ENCODE measurements at regions of chr6 and their contacts with region 1.

Region 1: DNA sequence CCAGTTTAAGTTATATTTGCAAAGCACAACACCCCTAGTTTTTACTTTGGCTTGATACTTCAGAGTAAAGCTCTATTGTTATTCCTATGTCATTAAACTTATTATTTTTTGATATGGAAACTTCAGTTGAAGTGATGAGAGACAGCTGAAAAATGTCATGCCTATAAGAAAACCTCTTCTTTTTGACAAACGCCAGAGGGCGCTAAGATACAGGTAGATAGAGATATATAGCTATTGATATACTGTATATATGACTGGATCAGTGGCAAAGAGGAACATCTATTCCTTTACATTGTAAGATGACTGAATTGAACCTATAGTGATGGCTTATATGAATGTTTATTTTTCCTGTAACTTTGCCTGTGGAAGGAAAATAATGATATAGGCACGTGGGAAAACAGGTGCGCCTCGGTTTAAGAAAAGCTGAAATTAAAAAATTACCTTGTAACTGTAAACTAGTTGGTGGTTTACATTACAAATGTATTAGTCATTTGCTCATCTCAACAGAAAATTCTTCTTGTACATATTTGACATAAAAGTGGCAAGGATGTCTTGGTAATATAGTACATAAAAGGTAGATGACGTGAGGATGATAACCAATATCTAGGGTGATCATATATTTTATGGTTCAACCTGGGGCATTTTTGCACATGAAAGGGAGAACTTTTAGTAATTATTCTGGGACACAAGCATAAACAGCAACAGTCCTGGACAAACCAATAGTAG is 74.1 kb downstream of the LAMA4 start:
- DNase-seq: peak; percentile 74
- H3K4me3 ChIP-seq: no peak overlapping the region
- H3K27ac ChIP-seq: no peak overlapping the region
- H3K27me3 ChIP-seq: no peaks in the 10 kb centered on the region
- CTCF ChIP-seq: peak; percentile 73

Region 2: DNA sequence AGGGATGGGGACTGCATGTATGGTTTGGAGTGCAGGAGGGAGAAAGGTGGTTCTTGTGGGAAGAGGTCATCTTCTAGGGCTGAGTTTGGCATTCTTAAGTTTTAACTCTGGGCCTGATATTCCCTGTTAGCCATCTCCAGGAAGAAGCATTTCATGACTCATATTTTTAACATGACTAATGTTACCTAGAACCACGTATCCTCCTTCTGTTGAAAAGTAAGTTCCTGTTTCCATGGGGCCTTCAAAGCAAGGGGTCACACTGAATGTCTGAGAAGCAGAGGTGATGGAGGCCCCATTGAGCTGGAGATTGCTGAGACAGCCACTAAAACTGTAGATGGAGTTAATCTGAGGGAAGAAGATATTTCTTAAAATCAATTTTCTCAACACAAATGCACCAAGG is 62.7 kb before region 1 on chr6:
- CTCF ChIA-PET with region 1: no interaction called
- POLR2A ChIA-PET with region 1: no interaction called
- DNase-seq: no peak
- H3K4me3 ChIP-seq: no peak overlapping the region
- H3K27ac ChIP-seq: no peak overlapping the region
- H3K27me3 ChIP-seq: no peaks in the 10 kb centered on the region
- CTCF ChIP-seq: no peak

Region 3: GRCh38 chr6:112223070-112223861 is 43.0 kb after region 1 on chr6:
- CTCF ChIA-PET with region 1: interaction called, 3 read pairs
- POLR2A ChIA-PET with region 1: interaction called, 13 read pairs
- DNase-seq: peak; percentile 86
- H3K4me3 ChIP-seq: no peak overlapping the region
- H3K27ac ChIP-seq: peak overlapping the region; percentile 85
- H3K27me3 ChIP-seq: no peaks in the 10 kb centered on the region
- CTCF ChIP-seq: no peak

Region 4: GRCh38 chr6:112253841-112254816 is 73.9 kb after region 1 on chr6 and contains the start of gene LAMA4:
- CTCF ChIA-PET with region 1: interaction called, 10 read pairs
- POLR2A ChIA-PET with region 1: interaction called, 5 read pairs
- DNase-seq: no peak
- H3K4me3 ChIP-seq: peak within 1 kb of the TSS; percentile 90
- H3K27ac ChIP-seq: peak within 1 kb of the TSS; percentile 69
- H3K27me3 ChIP-seq: no peaks in the 10 kb centered on the region
- CTCF ChIP-seq: no peak
- polyA plus RNA-seq, gene LAMA4: 231 and 246 TPM in 2 replicates

Region 5: DNA sequence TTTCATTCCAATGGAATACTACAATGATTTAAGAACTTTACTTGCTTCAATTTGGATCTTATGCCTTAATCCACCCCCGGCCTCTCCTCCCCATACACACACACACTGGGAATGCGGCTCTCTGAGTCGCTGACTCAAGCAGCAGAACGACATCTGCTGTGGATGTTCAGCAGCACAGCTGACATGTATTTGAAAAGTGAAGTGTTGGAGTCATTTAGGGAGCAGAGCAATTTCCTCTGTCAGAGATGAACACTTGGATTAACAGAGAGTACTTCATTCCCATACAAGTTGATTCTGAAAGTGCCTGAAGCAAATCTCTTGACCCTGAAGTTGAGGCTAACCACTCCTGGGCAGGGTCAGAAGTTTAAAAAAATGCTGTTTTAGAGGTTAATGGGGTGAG is 102.0 kb after region 1 on chr6:
- CTCF ChIA-PET with region 1: interaction called, 13 read pairs
- POLR2A ChIA-PET with region 1: no interaction called
- DNase-seq: peak; percentile 82
- H3K4me3 ChIP-seq: no peak overlapping the region
- H3K27ac ChIP-seq: no peak overlapping the region
- H3K27me3 ChIP-seq: no peaks in the 10 kb centered on the region
- CTCF ChIP-seq: peak; percentile 51

Region 6: GRCh38 chr6:112311950-112312547 is 131.8 kb after region 1 on chr6:
- CTCF ChIA-PET with region 1: interaction called, 41 read pairs
- POLR2A ChIA-PET with region 1: no interaction called
- DNase-seq: no peak
- H3K4me3 ChIP-seq: no peak overlapping the region
- H3K27ac ChIP-seq: no peak overlapping the region
- H3K27me3 ChIP-seq: no peaks in the 10 kb centered on the region
- CTCF ChIP-seq: peak; percentile 65

Region 7: GRCh38 chr6:112317041-112317860 is 137.0 kb after region 1 on chr6:
- CTCF ChIA-PET with region 1: interaction called, 13 read pairs
- POLR2A ChIA-PET with region 1: no interaction called
- DNase-seq: no peak
- H3K4me3 ChIP-seq: no peak overlapping the region
- H3K27ac ChIP-seq: no peak overlapping the region
- H3K27me3 ChIP-seq: no peaks in the 10 kb centered on the region
- CTCF ChIP-seq: no peak

Region 8: GRCh38 chr6:112372226-112372806 is 192.1 kb after region 1 on chr6:
- CTCF ChIA-PET with region 1: interaction called, 41 read pairs
- POLR2A ChIA-PET with region 1: no interaction called
- DNase-seq: peak; percentile 7
- H3K4me3 ChIP-seq: no peak overlapping the region
- H3K27ac ChIP-seq: no peak overlapping the region
- H3K27me3 ChIP-seq: no peaks in the 10 kb centered on the region
- CTCF ChIP-seq: peak; percentile 65

Measured in AG04450 (cell line).